T-cell (primary cell): ENCODE measurements at regions of chr22 and their contacts with region 1.

Region 1: DNA sequence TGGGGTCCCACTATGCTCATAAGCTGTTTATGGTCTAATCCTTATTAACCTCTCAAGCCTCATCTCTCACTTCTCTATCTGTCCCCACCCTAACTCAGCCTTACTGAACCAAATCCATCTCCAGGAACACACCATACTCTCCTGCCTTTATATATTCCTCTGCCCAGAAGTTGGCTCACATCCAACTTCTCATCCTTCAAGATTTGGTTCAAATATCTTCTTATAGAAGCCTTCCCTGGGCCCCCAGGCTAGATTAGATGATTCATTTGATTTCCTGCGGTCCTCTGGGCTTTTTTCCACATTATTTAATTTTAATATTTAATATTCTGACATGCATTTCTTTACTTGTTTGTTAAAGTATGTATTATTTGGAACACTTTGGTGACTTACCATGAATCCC is 23.2 kb downstream of the MEI1 start:
- DNase-seq: no peak
- ATAC-seq: no peak
- H3K4me3 ChIP-seq: no peak overlapping the region
- H3K4me3 Mint-ChIP-seq: no peak overlapping the region
- H3K27ac ChIP-seq: no peak overlapping the region
- H3K27ac Mint-ChIP-seq: no peak overlapping the region
- H3K4me1 ChIP-seq: no peaks in the 10 kb centered on the region
- H3K4me1 Mint-ChIP-seq: no peaks in the 10 kb centered on the region
- H3K27me3 ChIP-seq: peaks cover 0 to 11% of the 10 kb centered on the region in 2 experiments
- H3K27me3 Mint-ChIP-seq: peaks cover 0 to 7% of the 10 kb centered on the region in 2 donors

Region 2: DNA sequence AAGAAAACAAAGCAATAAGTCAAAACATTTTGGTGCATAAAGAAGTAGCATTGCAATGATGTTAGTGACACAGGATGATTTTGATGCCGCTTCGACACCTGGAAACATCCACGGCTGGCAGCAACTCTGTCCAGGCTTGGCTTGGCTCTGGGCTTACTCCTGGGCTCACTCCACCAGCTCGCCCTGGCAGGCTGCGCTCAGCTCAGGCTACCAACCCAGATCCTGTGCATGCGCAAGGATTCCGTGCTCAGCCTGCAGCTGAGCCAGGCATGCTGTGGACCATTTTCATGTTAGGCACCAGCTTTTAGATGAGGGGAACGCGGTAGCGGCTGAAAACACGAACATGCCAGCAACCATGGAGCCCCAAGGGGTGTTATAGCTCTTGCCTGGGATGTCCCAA is 969.4 kb before region 1 on chr22:
- CTCF ChIA-PET with region 1: no interaction called
- POLR2A ChIA-PET with region 1: no interaction called
- DNase-seq: no peak
- ATAC-seq: no peak
- H3K4me3 ChIP-seq: no peak overlapping the region
- H3K4me3 Mint-ChIP-seq: no peak overlapping the region
- H3K27ac ChIP-seq: no peak overlapping the region
- H3K27ac Mint-ChIP-seq: no peak overlapping the region
- H3K4me1 ChIP-seq: no peaks in the 10 kb centered on the region
- H3K4me1 Mint-ChIP-seq: peaks cover 0 to 7% (median 0%) of the 10 kb centered on the region in 3 donors
- H3K27me3 ChIP-seq: peaks cover 0 to 6% of the 10 kb centered on the region in 2 experiments
- H3K27me3 Mint-ChIP-seq: peaks cover 0 to 1% of the 10 kb centered on the region in 2 donors

Region 3: DNA sequence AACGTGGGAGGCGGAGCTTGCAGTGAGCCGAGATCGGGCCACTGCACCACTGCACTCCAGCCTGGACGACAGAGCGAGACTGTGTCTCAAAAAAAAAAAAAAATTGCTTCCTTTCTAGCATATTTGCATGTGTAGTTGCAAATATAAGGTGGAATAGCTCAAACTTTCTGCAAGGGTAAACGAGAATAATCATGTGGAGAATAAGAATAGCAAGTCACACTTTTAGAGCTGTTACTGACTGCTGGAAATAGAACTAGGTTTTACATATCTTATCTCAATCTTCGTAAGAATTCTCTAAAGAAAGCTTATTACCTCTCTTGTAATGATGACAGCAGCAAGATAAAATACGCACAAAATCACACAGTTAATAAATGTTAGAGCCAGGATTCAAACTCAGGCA is 515.8 kb before region 1 on chr22:
- CTCF ChIA-PET with region 1: no interaction called
- POLR2A ChIA-PET with region 1: no interaction called
- DNase-seq: no peak
- ATAC-seq: no peak
- H3K4me3 ChIP-seq: no peak overlapping the region
- H3K4me3 Mint-ChIP-seq: peak overlapping the region; percentile 43 to 72 (median 63)
- H3K27ac ChIP-seq: no peak overlapping the region
- H3K27ac Mint-ChIP-seq: no peak overlapping the region
- H3K4me1 ChIP-seq: peaks cover 0 to 15% of the 10 kb centered on the region in 2 experiments
- H3K4me1 Mint-ChIP-seq: peaks cover 40 to 47% (median 44%) of the 10 kb centered on the region in 3 donors
- H3K27me3 ChIP-seq: peaks cover 0 to 1% of the 10 kb centered on the region in 2 experiments
- H3K27me3 Mint-ChIP-seq: peaks cover 0 to 3% of the 10 kb centered on the region in 2 donors

Region 4: DNA sequence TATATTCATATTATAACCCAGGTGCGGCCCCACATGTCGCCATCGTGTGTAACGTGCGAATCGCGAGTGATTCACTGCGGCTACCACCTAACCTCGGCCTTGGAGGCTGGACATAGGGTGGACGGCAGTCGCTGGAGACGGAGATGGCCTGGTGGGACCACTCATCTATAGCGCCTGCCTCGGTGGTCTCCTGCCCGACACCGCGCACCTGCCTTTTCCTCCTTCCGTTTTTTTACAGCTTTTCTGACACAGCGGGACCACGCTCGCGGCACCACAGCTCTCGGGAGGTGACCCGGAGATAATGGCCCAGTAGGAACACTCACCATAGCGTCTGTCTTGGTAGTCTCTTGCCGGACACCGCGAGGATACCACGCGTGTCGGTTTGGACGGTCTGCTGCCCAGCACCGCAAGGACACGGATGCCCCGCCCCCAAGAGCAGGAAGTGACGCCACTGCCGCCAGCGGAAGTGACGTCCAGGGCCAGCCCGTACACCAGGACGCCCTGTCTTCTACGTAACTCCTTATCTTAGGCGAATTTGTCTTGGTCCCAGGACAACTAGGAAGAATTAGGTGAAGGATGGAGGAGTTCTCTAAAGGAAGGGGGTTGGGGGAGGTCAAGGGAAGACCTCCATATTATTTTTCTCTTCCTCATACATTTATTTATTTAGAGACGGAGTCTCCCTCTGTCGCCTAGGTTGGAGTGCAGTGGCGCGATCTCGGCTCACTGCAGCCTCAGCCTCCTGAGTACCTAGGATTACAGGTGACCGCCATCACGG is 40.3 kb before region 1 on chr22:
- CTCF ChIA-PET with region 1: no interaction called
- POLR2A ChIA-PET with region 1: no interaction called
- DNase-seq: peak; percentile 59 to 90 (median 79)
- ATAC-seq: peak; percentile 90 to 94 (median 93)
- H3K4me3 ChIP-seq: peak overlapping the region; percentile 75 to 78
- H3K4me3 Mint-ChIP-seq: peak overlapping the region; percentile 89 to 96 (median 96)
- H3K27ac ChIP-seq: peak overlapping the region; percentile 82
- H3K27ac Mint-ChIP-seq: peak overlapping the region; percentile 86 to 91
- H3K4me1 ChIP-seq: peaks cover 2 to 28% of the 10 kb centered on the region in 2 experiments
- H3K4me1 Mint-ChIP-seq: peaks cover 44 to 51% (median 46%) of the 10 kb centered on the region in 3 donors
- H3K27me3 ChIP-seq: no peaks in the 10 kb centered on the region
- H3K27me3 Mint-ChIP-seq: no peaks in the 10 kb centered on the region

Region 5: GRCh38 chr22:41766476-41766875 is 44.0 kb after region 1 on chr22:
- CTCF ChIA-PET with region 1: interaction called in 1 of 2 experiments, 10 read pairs
- POLR2A ChIA-PET with region 1: no interaction called
- DNase-seq: no peak
- ATAC-seq: no peak
- H3K4me3 ChIP-seq: no peak overlapping the region
- H3K4me3 Mint-ChIP-seq: no peak overlapping the region
- H3K27ac ChIP-seq: no peak overlapping the region
- H3K27ac Mint-ChIP-seq: no peak overlapping the region
- H3K4me1 ChIP-seq: no peaks in the 10 kb centered on the region
- H3K4me1 Mint-ChIP-seq: peaks cover 0 to 4% (median 0%) of the 10 kb centered on the region in 3 donors
- H3K27me3 ChIP-seq: no peaks in the 10 kb centered on the region
- H3K27me3 Mint-ChIP-seq: peaks cover 0 to 2% of the 10 kb centered on the region in 2 donors